Ascending aorta (tissue), 2 donors: ENCODE measurements at regions of chr5 and their contacts with region 1.

Region 1: GRCh38 chr5:108260117-108260857 is 121.6 kb downstream of the FBXL17 start:
- DNase-seq: peak in 1 of 2 donors; percentile 84
- H3K4me3 ChIP-seq: peak overlapping the region in 1 of 2 donors; percentile 18
- H3K27ac ChIP-seq: no peak overlapping the region
- H3K4me1 ChIP-seq: peaks cover 0 to 3% of the 10 kb centered on the region in 2 donors
- H3K27me3 ChIP-seq: no peaks in the 10 kb centered on the region
- CTCF ChIP-seq: peak; percentile 57 to 94 (median 87)

Region 2: GRCh38 chr5:108345541-108346171 is 85.4 kb after region 1 on chr5:
- intact Hi-C with region 1: loop called (anchors 5 kb)
- DNase-seq: no peak
- H3K4me3 ChIP-seq: no peak overlapping the region
- H3K27ac ChIP-seq: no peak overlapping the region
- H3K4me1 ChIP-seq: no peaks in the 10 kb centered on the region
- H3K27me3 ChIP-seq: no peaks in the 10 kb centered on the region
- CTCF ChIP-seq: peak in 2 of 3 experiments; percentile 16 to 41